H1 (cell line): ENCODE measurements at regions of chr1 and their contacts with region 1.

Region 1: GRCh38 chr1:90729504-90730242 is 12.6 kb upstream of the BARHL2 start:
- DNase-seq: peak in 1 of 2 experiments; percentile 92
- H3K4me3 ChIP-seq: peak overlapping the region in 3 of 4 experiments; percentile 36 to 55 (median 37); a peak in 5 of 8 replicates
- H3K27ac ChIP-seq: no peak overlapping the region
- H3K4me1 ChIP-seq: peaks cover 14 to 41% (median 27%) of the 10 kb centered on the region in 4 experiments
- H3K27me3 ChIP-seq: peaks cover 64 to 94% (median 86%) of the 10 kb centered on the region in 4 experiments
- CTCF ChIP-seq: peak; percentile 80 to 88 (median 82)
- EP300 ChIP-seq: no peak
- POLR2A ChIP-seq: no peak
- RAD21 ChIP-seq: peak; percentile 80 to 89

Region 2: GRCh38 chr1:90707363-90707710 is 22.3 kb before region 1 on chr1:
- CTCF ChIA-PET with region 1: interaction called, 122 read pairs
- POLR2A ChIA-PET with region 1: interaction called, 8 read pairs
- DNase-seq: peak in 1 of 2 experiments; percentile 88
- H3K4me3 ChIP-seq: peak overlapping the region in 3 of 4 experiments; percentile 23 to 54 (median 27); a peak in 4 of 8 replicates
- H3K27ac ChIP-seq: no peak overlapping the region
- H3K4me1 ChIP-seq: peaks cover 8 to 25% (median 18%) of the 10 kb centered on the region in 4 experiments
- H3K27me3 ChIP-seq: peaks cover 68 to 87% (median 80%) of the 10 kb centered on the region in 4 experiments
- CTCF ChIP-seq: no peak
- EP300 ChIP-seq: no peak
- POLR2A ChIP-seq: no peak
- RAD21 ChIP-seq: 0 out of 4 replicates have a peak, but pooled peaks of 1 of the 2 experiments have one; percentile 5

Region 3: DNA sequence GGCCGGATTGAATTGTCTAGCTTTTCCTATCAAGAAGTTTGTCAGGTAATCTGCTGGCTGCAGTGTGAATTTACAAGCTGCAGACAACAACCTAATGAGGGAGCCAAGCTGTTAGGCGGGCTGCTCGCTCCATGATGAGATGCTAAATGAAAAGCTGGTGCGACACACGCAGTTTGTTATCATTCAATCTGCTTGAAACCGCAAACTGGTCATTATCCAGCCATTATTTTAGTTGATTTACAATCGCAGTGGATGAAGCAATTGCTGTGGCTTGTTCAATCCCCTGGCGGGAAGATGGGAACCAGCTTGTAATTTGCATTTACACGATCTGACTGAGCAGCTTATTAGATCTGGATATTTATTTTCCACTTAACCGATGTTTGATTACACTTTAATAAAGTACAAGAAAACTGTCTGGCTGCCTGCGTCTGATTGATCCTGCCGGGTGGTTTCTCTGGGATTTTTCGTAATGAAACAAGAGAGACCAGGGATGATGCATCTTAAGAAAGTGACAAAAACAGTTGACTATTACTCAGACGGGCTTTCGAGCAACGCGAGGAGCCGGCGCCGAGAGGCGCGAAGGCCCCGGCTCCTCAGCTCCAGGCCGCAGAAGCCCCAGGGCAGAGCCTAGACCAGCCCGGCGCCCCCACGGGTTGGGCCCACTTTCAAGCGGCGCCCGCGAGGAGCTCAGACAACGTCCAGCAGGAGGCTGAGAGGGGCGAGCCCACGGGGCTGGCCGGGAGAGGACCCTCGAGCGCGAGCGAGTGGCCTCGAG is 105.4 kb after region 1 on chr1:
- CTCF ChIA-PET with region 1: interaction called, 33 read pairs
- POLR2A ChIA-PET with region 1: interaction called, 4 read pairs
- DNase-seq: peak in 1 of 2 experiments; percentile 71
- H3K4me3 ChIP-seq: peak overlapping the region; percentile 14 to 60 (median 40); a peak in 7 of 8 replicates
- H3K27ac ChIP-seq: no peak overlapping the region
- H3K4me1 ChIP-seq: peaks cover 12 to 32% (median 25%) of the 10 kb centered on the region in 4 experiments; a peak in 6 of 7 replicates
- H3K27me3 ChIP-seq: peaks cover 51 to 90% (median 78%) of the 10 kb centered on the region in 4 experiments
- CTCF ChIP-seq: no peak
- EP300 ChIP-seq: no peak
- POLR2A ChIP-seq: no peak
- RAD21 ChIP-seq: no peak

Region 4: GRCh38 chr1:90850898-90851710 is 121.4 kb after region 1 on chr1:
- CTCF ChIA-PET with region 1: interaction called, 139 read pairs
- POLR2A ChIA-PET with region 1: interaction called, 3 read pairs
- DNase-seq: peak in 1 of 2 experiments; percentile 87
- H3K4me3 ChIP-seq: peak overlapping the region; percentile 56 to 74 (median 68)
- H3K27ac ChIP-seq: no peak overlapping the region
- H3K4me1 ChIP-seq: peaks cover 0 to 5% (median 2%) of the 10 kb centered on the region in 4 experiments; a peak in 3 of 7 replicates
- H3K27me3 ChIP-seq: peaks cover 17 to 33% (median 23%) of the 10 kb centered on the region in 4 experiments
- CTCF ChIP-seq: peak; percentile 49 to 77 (median 51)
- EP300 ChIP-seq: no peak
- POLR2A ChIP-seq: no peak
- RAD21 ChIP-seq: peak; percentile 33 to 52; a peak in 3 of 4 replicates

Region 5: DNA sequence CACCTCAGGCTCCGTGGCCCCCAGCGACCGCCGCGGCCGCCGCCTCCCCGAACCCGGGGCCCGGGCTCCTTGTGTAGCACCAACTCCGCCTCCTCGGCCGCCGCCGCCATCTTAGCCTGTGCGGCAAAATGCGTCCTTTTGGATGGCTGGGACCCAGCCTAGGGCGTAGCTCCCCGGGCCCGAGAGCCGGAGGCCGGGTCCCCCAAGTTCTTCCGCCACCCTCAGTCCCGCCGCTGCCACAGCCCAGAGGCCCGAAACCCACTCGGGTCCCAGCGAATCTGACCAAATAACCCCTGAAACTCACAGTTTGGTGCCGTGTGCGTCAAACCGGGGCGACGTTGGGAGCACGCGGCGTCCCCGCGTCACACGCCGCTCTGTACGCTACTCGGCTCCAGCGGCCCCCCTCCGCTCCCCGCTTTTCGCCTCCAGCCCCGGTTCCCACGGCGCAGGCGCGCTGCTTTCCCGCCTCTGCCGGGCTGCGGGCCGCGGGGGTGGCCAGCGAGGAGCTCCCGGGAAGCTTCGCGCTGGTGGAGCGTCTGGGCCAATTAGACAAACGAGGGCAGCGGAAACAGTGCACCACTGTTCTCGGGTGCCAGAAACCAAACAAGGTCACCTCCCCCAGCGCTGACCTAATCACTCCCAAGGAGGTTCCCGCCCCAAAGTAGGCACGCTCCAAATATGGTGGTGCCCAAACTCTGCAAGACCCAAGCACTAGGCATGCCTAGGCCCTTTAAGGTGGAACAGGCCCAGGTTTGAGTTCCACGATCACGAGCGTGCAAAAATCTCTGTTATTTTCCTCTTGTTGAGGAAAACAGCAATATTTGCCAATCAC is 292.2 kb after region 1 on chr1 and contains the start of gene ZNF644:
- CTCF ChIA-PET with region 1: no interaction called
- POLR2A ChIA-PET with region 1: interaction called, 16 read pairs
- DNase-seq: peak; percentile 73 to 87
- H3K4me3 ChIP-seq: peak within 1 kb of the TSS; percentile 85 to 91 (median 90)
- H3K27ac ChIP-seq: peak within 1 kb of the TSS; percentile 100
- H3K4me1 ChIP-seq: peaks cover 0 to 6% (median 2%) of the 10 kb centered on the region in 4 experiments; a peak in 4 of 7 replicates
- H3K27me3 ChIP-seq: no peaks in the 10 kb centered on the region
- CTCF ChIP-seq: no peak
- EP300 ChIP-seq: no peak
- POLR2A ChIP-seq: peak; percentile 83 to 95
- RAD21 ChIP-seq: no peak
- total RNA-seq, gene ZNF644: 85.2 and 93.5 TPM in 2 replicates